ENCODE measurements at regions of chr17 and their contacts with region 1.

Region 1: DNA sequence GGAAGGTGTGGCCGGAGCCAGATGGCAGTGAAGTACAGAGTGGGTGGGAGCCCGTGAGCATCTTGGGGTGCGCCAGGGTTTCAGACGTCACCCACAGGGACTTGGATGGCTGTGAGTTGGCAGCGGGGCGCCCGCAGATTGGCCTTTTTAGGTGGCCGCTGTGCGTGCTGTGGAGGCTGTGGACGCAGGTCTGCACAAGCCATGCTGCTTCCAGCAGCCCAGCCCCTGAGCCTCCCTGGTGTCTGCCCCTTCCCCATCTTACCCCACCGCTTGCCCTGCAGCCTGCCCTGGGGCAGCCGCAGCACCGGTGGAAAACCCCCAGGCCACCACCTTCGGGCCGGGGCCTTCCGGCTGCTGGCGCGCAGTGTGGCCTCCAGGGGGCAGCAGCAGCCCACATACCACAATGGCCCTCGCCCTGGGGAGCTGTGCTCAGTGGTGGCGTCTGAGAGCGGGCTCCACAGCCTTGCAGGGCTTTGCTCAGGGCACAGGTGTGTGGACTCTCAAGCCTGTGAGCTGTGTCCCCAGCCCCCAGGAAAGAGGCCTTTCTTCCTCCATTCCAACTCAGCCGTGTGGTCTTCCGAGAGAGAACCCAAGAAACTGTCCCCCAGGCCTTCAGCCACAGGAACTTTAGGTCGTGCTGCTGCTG is 11.8 kb downstream of the ENDOV start:
- DNase-seq: peak; percentile 88
- H3K4me3 Mint-ChIP-seq: no peak overlapping the region
- H3K27ac Mint-ChIP-seq: no peak overlapping the region
- H3K4me1 Mint-ChIP-seq: peaks cover 19% of the 10 kb centered on the region
- H3K27me3 Mint-ChIP-seq: peaks cover 2% of the 10 kb centered on the region

Region 2: GRCh38 chr17:79671085-79671694 is 755.6 kb before region 1 on chr17:
- CTCF ChIA-PET with region 1: no interaction called
- POLR2A ChIA-PET with region 1: no interaction called
- DNase-seq: no peak
- H3K4me3 Mint-ChIP-seq: no peak overlapping the region
- H3K27ac Mint-ChIP-seq: no peak overlapping the region
- H3K4me1 Mint-ChIP-seq: no peaks in the 10 kb centered on the region
- H3K27me3 Mint-ChIP-seq: no peaks in the 10 kb centered on the region

Region 3: DNA sequence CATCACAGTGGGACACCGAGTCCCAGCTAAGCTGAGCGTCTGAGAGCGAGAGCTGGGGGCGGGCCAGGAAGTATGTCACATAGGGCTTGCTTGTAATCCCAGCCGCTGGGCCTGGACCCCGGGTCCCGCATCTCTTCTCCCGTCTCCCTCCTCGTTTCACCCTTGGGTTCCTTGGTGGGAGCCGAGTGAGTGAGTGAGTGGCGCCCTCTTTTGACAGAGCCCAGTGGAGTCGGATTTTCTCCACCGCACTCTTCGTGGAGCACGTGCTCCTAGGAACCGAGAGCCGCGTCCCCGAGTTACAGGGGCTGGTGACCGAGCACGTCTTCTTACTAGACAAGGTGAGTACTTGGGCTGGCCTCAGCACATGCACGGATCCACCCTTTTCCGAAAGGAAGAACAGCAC is 62.6 kb before region 1 on chr17:
- CTCF ChIA-PET with region 1: no interaction called
- POLR2A ChIA-PET with region 1: no interaction called
- DNase-seq: no peak
- H3K4me3 Mint-ChIP-seq: no peak overlapping the region
- H3K27ac Mint-ChIP-seq: no peak overlapping the region
- H3K4me1 Mint-ChIP-seq: no peaks in the 10 kb centered on the region
- H3K27me3 Mint-ChIP-seq: no peaks in the 10 kb centered on the region

Region 4: GRCh38 chr17:80377798-80378197 is 49.0 kb before region 1 on chr17:
- CTCF ChIA-PET with region 1: no interaction called
- POLR2A ChIA-PET with region 1: no interaction called
- DNase-seq: no peak
- H3K4me3 Mint-ChIP-seq: no peak overlapping the region
- H3K27ac Mint-ChIP-seq: no peak overlapping the region
- H3K4me1 Mint-ChIP-seq: peaks cover 6% of the 10 kb centered on the region
- H3K27me3 Mint-ChIP-seq: no peaks in the 10 kb centered on the region

Region 5: DNA sequence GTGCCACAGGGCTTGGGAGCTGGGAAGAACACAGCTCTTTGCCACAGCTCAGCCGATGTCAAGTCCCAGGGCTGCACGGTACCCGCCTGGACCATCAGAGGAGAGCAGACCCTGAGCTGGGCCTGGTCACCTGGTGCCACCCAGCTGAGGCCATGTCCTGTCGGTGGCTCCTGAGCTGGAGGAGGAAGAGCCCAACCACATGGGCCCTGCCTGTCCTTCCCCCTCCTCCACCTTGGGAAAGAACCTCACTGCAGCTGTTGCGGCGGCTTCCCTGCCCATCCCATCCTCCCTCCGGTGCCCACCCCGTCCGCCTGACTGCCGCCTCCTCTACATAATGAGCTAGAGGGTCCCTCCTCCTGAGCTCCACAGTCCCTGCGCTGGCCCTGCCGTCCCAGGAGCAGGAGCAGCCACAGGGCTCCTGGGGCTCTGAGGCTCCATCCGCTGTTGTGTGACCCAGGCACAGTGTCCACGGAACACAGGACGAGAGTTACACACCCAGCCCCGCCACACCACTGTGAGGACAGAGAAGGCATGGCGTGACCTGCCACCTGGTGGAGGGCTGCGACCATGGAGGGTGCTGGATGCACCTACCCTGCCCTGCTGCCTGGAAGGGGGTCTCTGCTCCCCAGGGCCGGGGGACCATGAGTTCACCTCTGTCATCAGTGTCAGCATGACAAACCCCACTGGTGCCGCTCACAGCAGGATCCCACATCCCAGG is 543.4 kb after region 1 on chr17:
- CTCF ChIA-PET with region 1: interaction called, 11 read pairs
- POLR2A ChIA-PET with region 1: interaction called, 5 read pairs
- DNase-seq: peak; percentile 67
- H3K4me3 Mint-ChIP-seq: no peak overlapping the region
- H3K27ac Mint-ChIP-seq: no peak overlapping the region
- H3K4me1 Mint-ChIP-seq: peaks cover 7% of the 10 kb centered on the region
- H3K27me3 Mint-ChIP-seq: peaks cover 3% of the 10 kb centered on the region

Region 6: DNA sequence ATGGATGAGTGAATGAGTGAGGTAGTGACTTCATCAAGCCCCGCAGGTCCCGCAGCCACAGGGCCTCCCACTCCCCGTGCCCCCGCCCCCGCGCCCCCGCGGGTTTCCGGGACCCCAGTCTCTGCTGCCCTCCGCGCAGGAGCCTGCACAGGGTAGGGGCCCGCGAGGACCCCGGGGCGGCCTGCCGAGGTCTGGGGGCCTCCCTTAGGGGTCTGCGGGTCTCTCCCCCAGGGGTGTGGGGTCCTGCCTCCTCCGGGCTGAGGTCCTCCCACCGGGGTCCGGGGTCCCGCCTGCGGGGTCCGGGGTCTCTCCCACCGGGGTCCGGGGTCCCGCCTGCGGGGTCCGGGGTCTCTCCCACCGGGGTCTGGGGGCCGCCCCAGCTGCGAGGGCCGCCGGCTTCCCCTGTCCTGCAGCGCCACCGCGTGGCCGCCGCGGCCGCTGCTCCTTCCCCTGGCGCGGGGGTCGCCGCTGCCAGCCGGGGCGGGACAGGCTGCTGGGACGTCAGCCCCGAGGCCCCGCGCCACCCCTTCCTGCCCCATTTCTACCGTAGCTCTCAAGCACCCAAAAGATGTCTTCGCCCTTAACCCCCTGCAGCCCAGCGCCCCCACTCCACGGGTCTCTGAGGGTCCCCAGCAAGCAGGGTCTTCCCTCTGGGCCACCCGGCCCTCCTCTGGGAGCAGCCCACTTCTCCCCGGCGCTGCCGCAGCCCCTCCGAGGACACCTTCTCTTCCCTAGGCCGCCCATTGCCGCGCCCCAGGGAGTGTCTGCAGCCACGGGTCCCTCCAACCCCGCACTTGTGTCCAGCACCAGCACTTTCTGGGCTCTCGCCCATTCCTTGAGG is 554.5 kb after region 1 on chr17:
- CTCF ChIA-PET with region 1: interaction called, 16 read pairs
- POLR2A ChIA-PET with region 1: no interaction called
- DNase-seq: peak; percentile 32
- H3K4me3 Mint-ChIP-seq: no peak overlapping the region
- H3K27ac Mint-ChIP-seq: no peak overlapping the region
- H3K4me1 Mint-ChIP-seq: peaks cover 8% of the 10 kb centered on the region
- H3K27me3 Mint-ChIP-seq: peaks cover 12% of the 10 kb centered on the region